Common myeloid progenitor, CD34-positive (primary cell): ENCODE measurements at regions of chr17 and their contacts with region 1.

Region 1: GRCh38 chr17:47941236-47941994 is at the start of gene PNPO:
- DNase-seq: peak; percentile 96 to 98 (median 97)
- H3K4me3 ChIP-seq: peak within 1 kb of the TSS; percentile 64 to 90 (median 80)
- H3K27ac ChIP-seq: peak within 1 kb of the TSS; percentile 62 to 81
- H3K4me1 ChIP-seq: peaks cover 6 to 54% (median 28%) of the 10 kb centered on the region in 4 experiments
- H3K27me3 ChIP-seq: no peaks in the 10 kb centered on the region

Region 2: GRCh38 chr17:47929218-47930000 is 12.0 kb before region 1 on chr17:
- CTCF ChIA-PET with region 1: interaction called, 11 read pairs
- POLR2A ChIA-PET with region 1: no interaction called
- DNase-seq: no peak
- H3K4me3 ChIP-seq: peak overlapping the region in 1 of 7 experiments; percentile 28
- H3K27ac ChIP-seq: peak overlapping the region in 1 of 2 experiments; percentile 31
- H3K4me1 ChIP-seq: peaks cover 0 to 22% (median 14%) of the 10 kb centered on the region in 4 experiments
- H3K27me3 ChIP-seq: no peaks in the 10 kb centered on the region

Region 3: GRCh38 chr17:47970704-47971463 is 29.5 kb after region 1 on chr17 and contains the start of gene CDK5RAP3:
- CTCF ChIA-PET with region 1: interaction called, 504 read pairs
- POLR2A ChIA-PET with region 1: interaction called, 4 read pairs
- DNase-seq: peak; percentile 98 to 99 (median 99)
- H3K4me3 ChIP-seq: peak within 1 kb of the TSS; percentile 64 to 93 (median 79)
- H3K27ac ChIP-seq: peak within 1 kb of the TSS in 1 of 2 experiments; percentile 71
- H3K4me1 ChIP-seq: peaks cover 0 to 24% (median 17%) of the 10 kb centered on the region in 4 experiments
- H3K27me3 ChIP-seq: no peaks in the 10 kb centered on the region

Region 4: GRCh38 chr17:48037036-48037837 is 95.8 kb after region 1 on chr17 and contains the start of gene COPZ2:
- CTCF ChIA-PET with region 1: no interaction called
- POLR2A ChIA-PET with region 1: no interaction called
- DNase-seq: peak; percentile 51 to 75 (median 74)
- H3K4me3 ChIP-seq: peak within 1 kb of the TSS; percentile 29 to 84 (median 60)
- H3K27ac ChIP-seq: no peak within 1 kb of the TSS
- H3K4me1 ChIP-seq: peaks cover 0 to 13% (median 11%) of the 10 kb centered on the region in 4 experiments
- H3K27me3 ChIP-seq: peaks cover 4 to 41% (median 12%) of the 10 kb centered on the region in 5 experiments